Dorsolateral prefrontal cortex (tissue), 120 donors: ENCODE measurements at regions of chr3 and their contacts with region 1.

Region 1: DNA sequence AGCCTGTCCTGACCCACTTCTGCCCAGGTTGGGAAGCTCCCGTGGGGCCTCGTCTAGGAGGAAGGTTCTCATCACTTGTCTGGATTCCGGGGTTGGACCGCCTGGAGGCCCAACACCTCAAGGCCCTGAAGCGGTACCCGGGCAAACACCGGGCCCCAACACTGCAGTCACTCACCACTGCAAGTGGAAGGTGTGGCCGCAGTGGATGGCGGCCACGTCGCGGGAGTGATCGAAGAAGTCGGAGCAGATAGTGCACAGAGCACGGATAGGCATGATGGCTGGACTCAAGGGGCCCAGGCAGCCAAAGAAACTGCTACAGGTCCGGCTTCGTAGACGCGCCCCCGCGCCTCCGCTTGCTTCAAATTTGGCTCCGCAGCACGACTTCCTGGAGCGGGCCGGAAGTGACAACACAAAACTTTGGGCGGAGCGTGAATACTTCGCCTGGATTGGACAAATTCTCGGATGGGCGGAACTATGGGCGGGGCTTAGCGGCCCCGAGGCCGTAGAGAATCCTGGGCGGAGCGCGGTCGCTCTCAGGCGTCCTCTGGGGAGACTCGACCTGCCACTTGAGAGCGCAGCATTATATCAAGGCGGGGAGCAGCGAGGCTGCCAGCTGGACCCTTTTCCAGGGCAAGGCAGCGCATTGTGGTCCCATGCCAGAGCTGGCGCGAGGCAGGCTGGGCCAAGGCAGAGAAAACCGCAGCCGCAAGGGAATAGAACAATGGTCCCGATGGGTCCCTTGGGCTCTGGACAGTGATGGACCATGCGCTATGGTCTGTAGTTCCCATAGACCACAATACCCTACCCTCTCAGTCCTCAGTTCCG is at the start of gene TRAIP:
- DNase-seq: peak; percentile 85 to 95 (median 93)
- H3K4me3 ChIP-seq: peak within 1 kb of the TSS; percentile 47 to 98 (median 73)
- H3K27ac ChIP-seq: peak within 1 kb of the TSS in 52 of 59 donors; percentile 41 to 92 (median 77)
- H3K27me3 ChIP-seq: no peaks in the 10 kb centered on the region
- CTCF ChIP-seq: peak in 27 of 56 donors; percentile 2 to 59 (median 25)
- total RNA-seq, gene TRAIP: 0.38 to 9.2 (median 3.0) TPM

Region 2: GRCh38 chr3:49656541-49657112 is 199.8 kb before region 1 on chr3:
- intact Hi-C with region 1: no loop called
- DNase-seq: peak in 1 of 10 donors; percentile 47
- H3K4me3 ChIP-seq: no peak overlapping the region
- H3K27ac ChIP-seq: peak overlapping the region in 50 of 59 donors; percentile 4 to 89 (median 57)
- H3K27me3 ChIP-seq: no peaks in the 10 kb centered on the region
- CTCF ChIP-seq: peak in 7 of 56 donors; percentile 8 to 22 (median 11)

Region 3: DNA sequence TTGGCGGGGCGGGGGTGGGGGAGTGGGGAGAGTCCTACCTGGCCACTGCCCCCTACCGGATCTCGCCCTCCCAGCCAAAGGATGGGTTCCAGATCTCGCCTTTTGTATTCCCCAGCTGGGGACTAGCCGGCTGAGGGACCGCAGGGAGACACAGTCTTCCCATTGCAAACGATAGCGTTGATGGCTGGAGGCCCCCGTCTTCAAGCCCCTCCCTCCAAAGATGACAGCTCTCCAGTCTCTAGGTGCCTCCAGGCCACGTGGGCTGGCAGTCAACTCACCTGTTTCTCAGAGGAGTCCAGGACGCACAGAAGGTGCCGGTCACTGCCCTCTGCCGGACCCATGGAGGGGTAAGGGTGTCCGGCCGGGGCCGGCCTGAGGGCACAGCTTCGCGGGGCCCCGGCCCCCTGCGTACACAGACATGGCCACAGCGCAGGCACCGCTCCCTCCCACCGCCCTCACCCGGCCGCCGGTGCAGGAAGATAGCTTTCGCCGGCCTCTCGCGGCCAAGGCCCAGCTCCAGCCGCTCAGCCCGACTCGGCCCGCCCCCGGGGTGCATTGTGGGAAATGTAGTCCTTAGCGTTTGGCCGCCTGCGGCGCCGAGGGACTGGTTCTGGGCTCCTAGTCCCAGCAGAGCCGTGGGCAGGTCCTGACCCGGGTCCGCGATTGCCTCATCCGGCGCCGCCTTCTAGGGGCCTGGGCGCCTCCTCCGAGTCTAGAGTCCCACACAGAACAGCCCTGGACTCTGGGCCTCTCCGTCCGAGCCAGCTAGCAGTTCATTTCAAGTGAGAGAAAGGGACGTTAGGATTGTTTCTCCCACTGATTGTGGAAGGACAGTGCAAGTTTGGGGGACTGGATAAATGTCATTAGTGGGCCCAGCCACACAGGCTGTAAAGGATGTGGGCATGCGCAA is 73.2 kb after region 1 on chr3 and contains the start of gene MON1A:
- intact Hi-C with region 1: loop called in 1 of 2 experiments (anchors 5 kb)
- DNase-seq: peak; percentile 87 to 98 (median 94)
- H3K4me3 ChIP-seq: peak within 1 kb of the TSS; percentile 63 to 98 (median 91)
- H3K27ac ChIP-seq: peak within 1 kb of the TSS; percentile 2 to 97 (median 89)
- H3K27me3 ChIP-seq: no peaks in the 10 kb centered on the region
- CTCF ChIP-seq: peak in 49 of 56 donors; percentile 11 to 67 (median 42)
- total RNA-seq, gene MON1A: 14.1 to 38.3 (median 21.6) TPM